CD4-positive, alpha-beta memory T cell (primary cell): ENCODE measurements at regions of chr1 and their contacts with region 1.

Region 1: GRCh38 chr1:155172732-155173477 is at the start of gene KRTCAP2:
- DNase-seq: peak; percentile 92 to 95 (median 93)
- H3K4me3 ChIP-seq: peak within 1 kb of the TSS; percentile 83 to 93
- H3K4me3 Mint-ChIP-seq: peak within 1 kb of the TSS; percentile 96 to 100 (median 99)
- H3K27ac ChIP-seq: peak within 1 kb of the TSS; percentile 87
- H3K27ac Mint-ChIP-seq: peak within 1 kb of the TSS; percentile 97 to 100 (median 99)
- H3K4me1 ChIP-seq: peaks cover 52% of the 10 kb centered on the region
- H3K4me1 Mint-ChIP-seq: peaks cover 31 to 64% (median 47%) of the 10 kb centered on the region in 4 donors
- H3K27me3 ChIP-seq: no peaks in the 10 kb centered on the region
- H3K27me3 Mint-ChIP-seq: no peaks in the 10 kb centered on the region
- total RNA-seq, gene KRTCAP2: 173 to 180 TPM

Region 2: DNA sequence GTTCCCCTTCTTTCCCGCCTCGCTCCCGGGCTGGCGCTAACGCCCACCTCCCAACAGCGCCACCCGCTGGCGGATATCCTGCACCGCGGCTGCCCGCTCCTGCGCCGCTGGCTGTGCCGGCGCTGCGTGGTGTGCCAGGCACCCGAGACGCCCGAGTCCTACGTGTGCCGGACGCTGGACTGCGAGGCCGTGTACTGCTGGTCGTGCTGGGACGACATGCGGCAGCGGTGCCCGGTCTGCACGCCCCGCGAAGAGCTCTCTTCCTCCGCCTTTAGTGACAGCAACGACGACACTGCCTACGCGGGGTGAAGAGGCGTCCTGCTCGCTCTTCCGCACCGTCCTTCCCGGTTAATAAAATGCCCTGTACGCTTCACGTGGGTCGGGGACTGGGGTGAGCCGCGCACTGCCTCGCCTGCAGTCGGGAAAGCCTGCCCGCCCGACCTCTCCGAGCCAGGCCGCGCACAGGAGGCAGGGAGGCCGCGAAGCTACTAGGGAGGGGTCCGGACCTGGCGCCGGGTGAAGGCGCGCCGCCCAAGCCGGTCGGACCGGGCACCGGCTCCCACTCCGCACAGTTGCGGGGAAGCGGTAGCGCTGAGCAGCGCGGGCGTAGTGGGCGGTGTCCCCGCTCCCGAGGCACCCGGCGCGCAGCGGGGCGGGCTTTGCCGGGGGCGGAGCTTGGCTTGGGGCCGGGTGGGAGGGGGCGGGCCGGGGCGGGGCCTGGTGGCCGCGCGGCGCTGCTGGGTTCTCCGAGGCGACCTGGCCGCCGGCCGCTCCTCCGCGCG is 122.2 kb before region 1 on chr1 and contains the start of gene ADAM15:
- CTCF ChIA-PET with region 1: interaction called, 8 read pairs
- POLR2A ChIA-PET with region 1: interaction called, 12 read pairs
- intact Hi-C with region 1: no loop called
- DNase-seq: peak; percentile 74 to 79 (median 77)
- H3K4me3 ChIP-seq: peak within 1 kb of the TSS; percentile 69 to 92
- H3K4me3 Mint-ChIP-seq: peak within 1 kb of the TSS; percentile 86 to 92 (median 88)
- H3K27ac ChIP-seq: peak within 1 kb of the TSS; percentile 71
- H3K27ac Mint-ChIP-seq: peak within 1 kb of the TSS; percentile 70 to 93 (median 90)
- H3K4me1 ChIP-seq: peaks cover 27% of the 10 kb centered on the region
- H3K4me1 Mint-ChIP-seq: peaks cover 14 to 33% (median 27%) of the 10 kb centered on the region in 4 donors
- H3K27me3 ChIP-seq: no peaks in the 10 kb centered on the region
- H3K27me3 Mint-ChIP-seq: no peaks in the 10 kb centered on the region
- total RNA-seq, gene ADAM15: 33.6 to 39.8 TPM

Region 3: DNA sequence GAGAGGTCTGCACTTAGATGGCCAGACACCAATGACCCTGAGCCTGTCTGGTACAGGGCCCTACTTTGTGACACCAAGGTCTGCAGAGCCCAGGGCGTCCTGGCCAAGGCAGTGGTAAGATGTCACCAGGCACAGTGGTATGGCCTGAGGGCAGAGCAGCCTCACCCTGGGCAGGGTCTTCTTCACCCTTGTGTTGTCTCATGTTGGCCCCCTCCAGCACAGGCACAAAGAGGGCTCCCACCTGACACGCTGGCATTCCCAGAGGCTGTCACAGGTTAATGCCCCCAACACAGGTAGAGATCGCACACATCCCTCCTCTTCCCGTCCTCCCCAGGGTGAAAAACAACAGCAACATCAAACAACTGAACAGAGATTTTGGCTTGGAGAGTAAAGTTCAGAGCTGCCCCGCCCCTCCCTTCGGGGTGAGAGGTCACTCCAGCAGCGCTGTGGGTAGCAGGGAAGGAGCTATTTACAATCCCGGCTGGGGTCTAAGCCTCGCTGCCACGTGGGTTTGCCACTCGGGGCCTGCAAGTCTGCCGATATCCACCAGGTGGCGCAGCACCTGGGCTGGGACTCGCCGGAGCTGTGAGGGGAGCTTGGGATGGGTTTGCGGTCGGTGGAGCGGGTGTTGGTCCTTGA is 81.7 kb before region 1 on chr1:
- CTCF ChIA-PET with region 1: interaction called, 229 read pairs
- POLR2A ChIA-PET with region 1: interaction called, 27 read pairs
- intact Hi-C with region 1: no loop called
- DNase-seq: peak; percentile 72 to 78 (median 74)
- H3K4me3 ChIP-seq: no peak overlapping the region
- H3K4me3 Mint-ChIP-seq: no peak overlapping the region
- H3K27ac ChIP-seq: no peak overlapping the region
- H3K27ac Mint-ChIP-seq: no peak overlapping the region
- H3K4me1 ChIP-seq: peaks cover 14% of the 10 kb centered on the region
- H3K4me1 Mint-ChIP-seq: peaks cover 3 to 10% (median 5%) of the 10 kb centered on the region in 4 donors
- H3K27me3 ChIP-seq: no peaks in the 10 kb centered on the region
- H3K27me3 Mint-ChIP-seq: peaks cover 2 to 3% of the 10 kb centered on the region in 2 donors

Region 4: DNA sequence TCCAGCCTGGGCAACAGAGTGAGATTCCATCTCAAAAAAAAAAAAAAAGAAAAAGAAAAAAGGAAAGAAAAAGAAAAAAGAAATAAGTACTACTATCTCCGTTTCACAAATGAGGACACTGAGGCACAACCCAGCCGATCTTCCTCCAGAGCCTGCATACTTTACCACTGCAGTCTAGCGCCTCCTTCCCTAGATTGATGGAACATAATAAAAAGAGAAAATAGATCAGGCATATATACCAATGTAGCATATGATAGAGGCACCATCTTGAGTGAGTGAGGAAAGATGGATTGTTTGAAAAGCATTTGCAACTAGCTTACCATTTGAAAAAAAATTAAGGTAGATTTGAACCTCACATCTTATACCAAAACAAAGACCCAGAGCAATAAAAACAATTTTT is 27.4 kb before region 1 on chr1:
- CTCF ChIA-PET with region 1: interaction called, 11 read pairs
- POLR2A ChIA-PET with region 1: interaction called, 3 read pairs
- intact Hi-C with region 1: no loop called
- DNase-seq: no peak
- H3K4me3 ChIP-seq: no peak overlapping the region
- H3K4me3 Mint-ChIP-seq: no peak overlapping the region
- H3K27ac ChIP-seq: no peak overlapping the region
- H3K27ac Mint-ChIP-seq: no peak overlapping the region
- H3K4me1 ChIP-seq: peaks cover 3% of the 10 kb centered on the region
- H3K4me1 Mint-ChIP-seq: peaks cover 2 to 4% (median 2%) of the 10 kb centered on the region in 4 donors
- H3K27me3 ChIP-seq: no peaks in the 10 kb centered on the region
- H3K27me3 Mint-ChIP-seq: peaks cover 6 to 30% of the 10 kb centered on the region in 2 donors

Region 5: GRCh38 chr1:155208541-155209311 is 35.8 kb after region 1 on chr1 and contains the start of gene MTX1:
- CTCF ChIA-PET with region 1: interaction called, 22 read pairs
- POLR2A ChIA-PET with region 1: interaction called, 17 read pairs
- intact Hi-C with region 1: loop called (anchors 5 kb)
- DNase-seq: peak; percentile 90 to 96 (median 91)
- H3K4me3 ChIP-seq: peak within 1 kb of the TSS; percentile 68 to 100
- H3K4me3 Mint-ChIP-seq: peak within 1 kb of the TSS; percentile 86 to 92 (median 89)
- H3K27ac ChIP-seq: peak within 1 kb of the TSS; percentile 100
- H3K27ac Mint-ChIP-seq: peak within 1 kb of the TSS; percentile 95 to 98 (median 98)
- H3K4me1 ChIP-seq: peaks cover 29% of the 10 kb centered on the region
- H3K4me1 Mint-ChIP-seq: peaks cover 17 to 29% (median 24%) of the 10 kb centered on the region in 4 donors
- H3K27me3 ChIP-seq: no peaks in the 10 kb centered on the region
- H3K27me3 Mint-ChIP-seq: no peaks in the 10 kb centered on the region
- total RNA-seq, gene MTX1: 17.7 to 18.2 TPM

Region 6: DNA sequence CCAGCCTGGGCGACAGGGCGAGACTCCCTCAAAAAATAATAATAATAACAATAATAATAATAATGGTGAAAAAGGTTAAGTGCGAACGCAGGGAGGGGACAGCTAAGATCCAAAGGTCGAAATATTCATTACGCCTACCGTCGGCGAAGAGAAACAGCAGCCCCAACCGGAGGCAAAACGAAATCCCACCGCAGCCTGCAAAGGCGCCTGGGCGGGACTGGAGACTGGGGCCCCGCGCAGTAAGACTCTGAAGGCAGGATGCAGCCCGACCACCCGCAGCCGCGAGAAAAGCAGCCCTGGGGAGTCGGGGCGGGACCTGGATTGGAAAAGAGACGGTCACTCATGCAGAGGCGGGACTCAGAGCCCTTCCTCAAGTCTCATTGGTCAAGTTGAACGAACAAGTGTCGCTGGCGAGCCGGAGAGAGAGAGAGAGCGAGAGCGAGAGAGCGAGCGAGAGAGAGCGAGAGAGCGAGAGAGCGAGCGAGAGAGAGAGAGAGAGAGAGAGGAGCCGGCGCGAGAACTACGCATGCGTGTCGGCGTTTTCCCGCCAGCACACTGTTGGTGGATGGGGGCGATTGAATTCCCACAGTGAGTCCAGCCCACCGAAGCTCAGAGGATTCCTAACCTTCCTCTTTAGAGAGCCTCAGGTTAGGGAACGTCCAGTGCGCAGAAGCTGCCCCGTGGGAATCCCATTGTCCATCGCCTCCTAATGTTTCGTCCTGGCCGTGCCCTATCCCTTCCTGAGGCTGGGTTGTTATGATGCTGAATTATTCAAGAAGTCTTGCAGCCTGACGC is 71.7 kb after region 1 on chr1:
- CTCF ChIA-PET with region 1: interaction called, 20 read pairs
- POLR2A ChIA-PET with region 1: interaction called, 17 read pairs
- intact Hi-C with region 1: loop called (anchors 5 kb)
- DNase-seq: peak; percentile 94 to 98 (median 96)
- H3K4me3 ChIP-seq: peak overlapping the region; percentile 11 to 73
- H3K4me3 Mint-ChIP-seq: peak overlapping the region; percentile 90 to 98 (median 93)
- H3K27ac ChIP-seq: peak overlapping the region; percentile 78
- H3K27ac Mint-ChIP-seq: peak overlapping the region; percentile 95 to 100 (median 99)
- H3K4me1 ChIP-seq: peaks cover 47% of the 10 kb centered on the region
- H3K4me1 Mint-ChIP-seq: peaks cover 14 to 58% (median 39%) of the 10 kb centered on the region in 4 donors
- H3K27me3 ChIP-seq: no peaks in the 10 kb centered on the region
- H3K27me3 Mint-ChIP-seq: peaks cover 3% of the 10 kb centered on the region in 2 donors

Region 7: DNA sequence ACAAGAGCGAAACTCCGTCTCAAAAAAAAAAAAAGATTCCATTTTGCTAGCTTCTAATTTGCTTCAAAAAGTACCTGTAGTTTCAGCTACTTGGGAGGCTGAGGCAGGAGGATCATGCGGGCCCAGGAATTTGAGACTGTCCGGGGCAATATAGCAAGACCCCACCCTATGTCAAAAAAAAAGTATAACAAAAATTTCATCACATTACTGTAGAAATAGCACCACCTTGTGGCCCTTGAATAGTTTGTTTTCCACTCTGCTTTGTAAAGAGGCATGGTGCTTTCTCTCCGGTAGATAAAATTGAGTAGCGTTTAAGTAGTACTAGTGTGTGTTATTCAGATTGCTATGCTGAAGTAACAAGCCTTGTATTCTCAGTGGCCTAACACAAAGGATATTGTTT is 418.9 kb after region 1 on chr1:
- CTCF ChIA-PET with region 1: interaction called, 3 read pairs
- POLR2A ChIA-PET with region 1: no interaction called
- intact Hi-C with region 1: loop called (anchors 1 kb)
- DNase-seq: peak in 4 of 5 donors; percentile 59 to 68 (median 62)
- H3K4me3 ChIP-seq: no peak overlapping the region
- H3K4me3 Mint-ChIP-seq: no peak overlapping the region
- H3K27ac ChIP-seq: no peak overlapping the region
- H3K27ac Mint-ChIP-seq: no peak overlapping the region
- H3K4me1 ChIP-seq: no peaks in the 10 kb centered on the region
- H3K4me1 Mint-ChIP-seq: peaks cover 0 to 3% (median 3%) of the 10 kb centered on the region in 4 donors
- H3K27me3 ChIP-seq: no peaks in the 10 kb centered on the region
- H3K27me3 Mint-ChIP-seq: no peaks in the 10 kb centered on the region